ENCODE measurements at regions of chr19 and their contacts with region 1.

Region 1: DNA sequence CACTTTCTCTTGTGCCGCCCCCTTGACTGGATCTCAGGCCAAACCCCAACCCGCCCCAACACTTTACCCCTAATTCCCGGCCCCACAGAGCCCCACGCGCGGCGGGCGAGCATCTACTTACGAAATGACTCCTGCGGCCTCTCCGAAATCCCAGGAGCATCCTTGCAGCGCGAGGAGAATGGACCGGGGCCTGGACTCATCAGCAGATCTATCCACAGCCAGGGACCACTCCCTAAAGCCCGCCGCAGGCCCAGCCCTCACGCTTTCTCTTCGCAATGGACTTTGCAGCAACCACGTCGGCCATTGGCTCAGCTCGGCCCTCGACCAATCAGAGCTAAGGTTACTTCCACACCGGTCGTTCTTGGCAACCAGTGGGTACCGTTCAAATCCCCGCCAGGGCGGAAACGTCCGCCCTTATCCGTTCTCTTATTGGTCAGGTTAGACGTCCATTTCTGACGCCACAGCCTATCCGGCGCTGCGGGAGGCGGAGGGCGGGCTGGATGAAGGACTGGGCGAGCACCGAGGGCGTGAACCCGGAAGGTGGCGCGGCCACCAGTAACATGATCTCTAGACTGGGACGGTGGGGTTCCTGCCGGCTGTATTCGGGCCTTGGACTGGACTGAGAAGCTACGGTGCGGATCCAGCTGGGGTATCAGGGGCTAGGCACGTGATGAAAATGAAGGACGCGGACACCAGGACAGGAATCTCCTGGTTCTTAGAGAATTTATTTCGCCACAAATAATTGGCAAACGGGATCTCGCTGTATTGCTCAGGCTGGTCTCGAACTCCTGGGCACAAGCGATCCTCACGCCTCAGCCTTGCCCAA is at the starts of genes CEP89 and FAAP24:
- DNase-seq: peak; percentile 96 to 99 (median 98)
- ATAC-seq: peak; percentile 98
- H3K4me3 ChIP-seq: peak within 1 kb of the TSS; percentile 87 to 90
- H3K4me3 Mint-ChIP-seq: peak within 1 kb of the TSS; percentile 99
- H3K27ac ChIP-seq: peak within 1 kb of the TSS; percentile 68 to 93
- H3K27ac Mint-ChIP-seq: peak within 1 kb of the TSS; percentile 98
- H3K4me1 ChIP-seq: peaks cover 10% of the 10 kb centered on the region
- H3K4me1 Mint-ChIP-seq: peaks cover 24% of the 10 kb centered on the region
- H3K27me3 ChIP-seq: no peaks in the 10 kb centered on the region
- H3K27me3 Mint-ChIP-seq: no peaks in the 10 kb centered on the region
- CTCF ChIP-seq: no peak
- total RNA-seq, gene CEP89: 3.0 to 5.5 TPM
- total RNA-seq, gene FAAP24: 0.69 to 1.2 TPM

Region 2: DNA sequence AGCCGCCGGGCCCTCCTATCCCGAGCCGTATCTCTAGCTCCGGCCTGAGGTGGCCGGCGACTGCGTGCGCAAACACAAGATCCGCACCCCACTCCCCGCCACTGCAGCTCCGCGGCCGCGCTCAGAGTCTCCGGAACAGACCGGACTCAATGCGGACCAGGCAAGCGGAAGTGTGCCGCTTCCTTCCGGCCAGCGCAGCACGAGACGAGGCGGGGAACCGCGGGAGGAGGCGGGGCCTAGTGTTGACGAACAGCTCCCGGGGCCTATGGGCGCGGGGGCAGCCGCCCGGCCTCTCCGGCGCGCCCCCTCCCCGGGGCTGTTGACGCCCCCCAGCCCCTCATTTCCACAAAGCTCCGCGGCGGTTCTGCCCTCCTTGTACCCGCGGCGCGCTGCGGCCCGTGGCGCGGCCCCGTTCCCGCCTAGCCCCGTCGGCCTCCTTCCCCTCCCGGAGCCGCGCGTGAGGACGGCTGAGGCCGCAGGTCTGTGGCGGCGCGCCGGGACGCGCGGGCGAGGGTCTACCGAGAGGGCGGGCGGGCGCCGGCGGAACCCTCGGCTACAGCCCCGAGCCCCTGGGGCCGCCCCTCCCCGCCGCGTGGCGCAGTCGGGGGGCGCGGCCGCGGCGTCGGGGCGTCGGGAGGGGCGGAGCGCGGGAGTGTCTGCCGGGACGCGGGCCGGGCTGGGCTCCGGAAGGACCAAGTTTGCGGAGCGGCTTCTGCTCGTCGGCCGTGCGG is 566.3 kb before region 1 on chr19 and contains the start of gene DPY19L3:
- CTCF ChIA-PET with region 1: no interaction called
- POLR2A ChIA-PET with region 1: no interaction called
- intact Hi-C with region 1: loop called in 1 of 2 experiments (anchors 10 kb)
- DNase-seq: peak; percentile 73 to 93 (median 89)
- ATAC-seq: peak; percentile 88
- H3K4me3 ChIP-seq: peak within 1 kb of the TSS; percentile 73 to 79
- H3K4me3 Mint-ChIP-seq: peak within 1 kb of the TSS; percentile 90
- H3K27ac ChIP-seq: peak within 1 kb of the TSS; percentile 87 to 91
- H3K27ac Mint-ChIP-seq: peak within 1 kb of the TSS; percentile 92
- H3K4me1 ChIP-seq: peaks cover 14% of the 10 kb centered on the region
- H3K4me1 Mint-ChIP-seq: peaks cover 22% of the 10 kb centered on the region
- H3K27me3 ChIP-seq: no peaks in the 10 kb centered on the region
- H3K27me3 Mint-ChIP-seq: no peaks in the 10 kb centered on the region
- CTCF ChIP-seq: no peak
- total RNA-seq, gene DPY19L3: 7.9 TPM

Region 3: DNA sequence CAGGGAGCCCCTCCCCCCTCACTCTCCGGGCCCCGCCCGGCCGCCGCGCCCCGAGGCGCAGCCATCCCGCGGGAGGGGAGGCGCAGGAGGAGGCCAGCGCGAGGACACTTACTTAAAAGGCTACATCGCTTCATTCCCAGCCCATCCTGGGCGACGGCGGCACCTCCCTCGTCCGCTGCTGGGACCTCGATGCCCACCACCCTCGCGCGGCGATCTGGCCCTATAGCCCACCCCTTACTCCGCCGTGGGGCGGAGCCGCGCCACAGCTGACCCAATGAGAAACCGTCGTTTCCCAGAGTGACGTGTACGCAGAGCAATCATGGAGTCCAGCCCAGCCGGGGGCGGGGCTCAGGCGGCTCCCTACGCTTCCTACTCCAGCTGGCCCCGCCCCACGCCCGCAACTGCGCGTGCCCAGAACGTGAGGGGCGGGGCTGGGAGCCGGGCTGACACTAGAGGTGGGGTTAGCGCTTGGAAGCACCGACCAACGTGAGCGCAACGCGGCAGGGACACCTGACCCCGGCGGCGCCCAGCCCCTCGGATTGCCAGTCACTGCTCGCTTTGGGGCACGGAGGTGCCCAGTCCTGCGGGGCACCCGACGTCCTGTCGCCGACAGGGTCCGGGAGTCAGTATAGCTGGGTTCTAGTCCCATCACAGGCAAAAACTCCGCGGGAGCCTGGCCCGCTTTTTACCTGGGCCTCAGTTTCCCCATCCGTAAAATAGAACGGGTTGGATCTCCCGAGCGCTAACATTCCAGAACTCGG is 296.8 kb before region 1 on chr19 and contains the start of gene ANKRD27:
- CTCF ChIA-PET with region 1: interaction called, 3 read pairs
- POLR2A ChIA-PET with region 1: no interaction called
- intact Hi-C with region 1: loop called (anchors 1 to 2 kb)
- DNase-seq: peak; percentile 95 to 99 (median 98)
- ATAC-seq: peak; percentile 94
- H3K4me3 ChIP-seq: peak within 1 kb of the TSS; percentile 93 to 99
- H3K4me3 Mint-ChIP-seq: peak within 1 kb of the TSS; percentile 94
- H3K27ac ChIP-seq: peak within 1 kb of the TSS; percentile 70 to 82
- H3K27ac Mint-ChIP-seq: peak within 1 kb of the TSS; percentile 80
- H3K4me1 ChIP-seq: peaks cover 32% of the 10 kb centered on the region
- H3K4me1 Mint-ChIP-seq: peaks cover 44% of the 10 kb centered on the region
- H3K27me3 ChIP-seq: peaks cover 0 to 6% of the 10 kb centered on the region in 2 experiments
- H3K27me3 Mint-ChIP-seq: peaks cover 11% of the 10 kb centered on the region
- CTCF ChIP-seq: no peak
- total RNA-seq, gene ANKRD27: 15.2 to 16.0 TPM

Region 4: GRCh38 chr19:32748497-32748896 is 223.4 kb before region 1 on chr19:
- CTCF ChIA-PET with region 1: interaction called, 4 read pairs
- POLR2A ChIA-PET with region 1: no interaction called
- intact Hi-C with region 1: loop called in 1 of 2 experiments (anchors 1 kb)
- DNase-seq: peak in 5 of 9 experiments; percentile 24 to 54 (median 45)
- ATAC-seq: peak; percentile 47
- H3K4me3 ChIP-seq: no peak overlapping the region
- H3K4me3 Mint-ChIP-seq: no peak overlapping the region
- H3K27ac ChIP-seq: no peak overlapping the region
- H3K27ac Mint-ChIP-seq: no peak overlapping the region
- H3K4me1 ChIP-seq: peaks cover 41% of the 10 kb centered on the region
- H3K4me1 Mint-ChIP-seq: peaks cover 28% of the 10 kb centered on the region
- H3K27me3 ChIP-seq: no peaks in the 10 kb centered on the region
- H3K27me3 Mint-ChIP-seq: peaks cover 10% of the 10 kb centered on the region
- CTCF ChIP-seq: peak; percentile 48

Region 5: GRCh38 chr19:33118643-33119042 is 146.7 kb after region 1 on chr19:
- CTCF ChIA-PET with region 1: interaction called, 15 read pairs
- POLR2A ChIA-PET with region 1: interaction called, 3 read pairs
- intact Hi-C with region 1: loop called in 1 of 2 experiments (anchors 1 kb)
- DNase-seq: no peak
- ATAC-seq: no peak
- H3K4me3 ChIP-seq: no peak overlapping the region
- H3K4me3 Mint-ChIP-seq: no peak overlapping the region
- H3K27ac ChIP-seq: no peak overlapping the region
- H3K27ac Mint-ChIP-seq: no peak overlapping the region
- H3K4me1 ChIP-seq: no peaks in the 10 kb centered on the region
- H3K4me1 Mint-ChIP-seq: no peaks in the 10 kb centered on the region
- H3K27me3 ChIP-seq: no peaks in the 10 kb centered on the region
- H3K27me3 Mint-ChIP-seq: no peaks in the 10 kb centered on the region
- CTCF ChIP-seq: no peak

Region 6: GRCh38 chr19:33373701-33374421 is 401.9 kb after region 1 on chr19 and contains the start of gene CEBPG:
- CTCF ChIA-PET with region 1: no interaction called
- POLR2A ChIA-PET with region 1: no interaction called
- intact Hi-C with region 1: loop called in 1 of 2 experiments (anchors 5 kb)
- DNase-seq: peak in 8 of 9 experiments; percentile 21 to 86 (median 56)
- ATAC-seq: peak; percentile 37
- H3K4me3 ChIP-seq: peak within 1 kb of the TSS; percentile 90 to 91
- H3K4me3 Mint-ChIP-seq: peak within 1 kb of the TSS; percentile 84
- H3K27ac ChIP-seq: peak within 1 kb of the TSS; percentile 77 to 86
- H3K27ac Mint-ChIP-seq: peak within 1 kb of the TSS; percentile 88
- H3K4me1 ChIP-seq: peaks cover 15% of the 10 kb centered on the region
- H3K4me1 Mint-ChIP-seq: peaks cover 46% of the 10 kb centered on the region
- H3K27me3 ChIP-seq: no peaks in the 10 kb centered on the region
- H3K27me3 Mint-ChIP-seq: no peaks in the 10 kb centered on the region
- CTCF ChIP-seq: no peak
- total RNA-seq, gene CEBPG: 14.4 to 17.2 TPM

Measured in CD8-positive, alpha-beta T cell (primary cell).